ENCODE measurements at regions of chr5 and their contacts with region 1.

Region 1: GRCh38 chr5:20949636-20950035 is 961.6 kb upstream of the CDH18 start:
- DNase-seq: no peak
- ATAC-seq: no peak
- H3K4me3 ChIP-seq: no peak overlapping the region
- H3K27ac ChIP-seq: no peak overlapping the region
- H3K4me1 ChIP-seq: no peaks in the 10 kb centered on the region
- H3K27me3 ChIP-seq: no peaks in the 10 kb centered on the region
- CTCF ChIP-seq: no peak

Region 2: GRCh38 chr5:20590356-20590755 is 359.3 kb before region 1 on chr5:
- CTCF ChIA-PET with region 1: no interaction called
- POLR2A ChIA-PET with region 1: interaction called, 27 read pairs
- intact Hi-C with region 1: no loop called
- DNase-seq: no peak
- ATAC-seq: no peak
- H3K4me3 ChIP-seq: no peak overlapping the region
- H3K27ac ChIP-seq: no peak overlapping the region
- H3K4me1 ChIP-seq: no peaks in the 10 kb centered on the region
- H3K27me3 ChIP-seq: no peaks in the 10 kb centered on the region
- CTCF ChIP-seq: no peak

Region 3: DNA sequence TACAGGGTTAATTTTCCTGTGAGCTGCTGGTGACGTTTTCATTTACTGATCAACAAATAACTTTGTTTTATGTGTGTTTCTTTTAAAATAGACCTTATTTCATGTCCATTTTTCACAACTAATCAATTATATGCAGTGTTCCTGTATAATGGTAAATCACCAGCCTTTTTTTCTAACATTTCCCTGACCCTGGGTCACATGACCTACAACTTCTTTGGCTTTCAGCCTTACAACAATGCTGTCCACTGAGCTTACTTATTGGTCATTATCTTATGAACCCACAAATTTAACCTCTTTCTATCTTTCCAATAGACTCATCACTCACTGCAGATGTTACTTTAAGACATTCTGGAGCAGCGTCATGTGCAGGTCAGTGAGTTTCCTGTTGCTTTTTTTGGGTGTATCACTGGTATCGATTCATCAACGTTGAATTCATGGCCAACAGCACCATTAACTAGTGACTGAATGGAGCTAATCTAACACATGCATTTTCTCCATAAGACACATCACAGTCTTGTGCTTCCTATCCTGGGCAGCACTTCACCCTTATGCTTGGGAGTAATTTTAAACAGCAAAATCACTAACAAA is 289.1 kb before region 1 on chr5:
- CTCF ChIA-PET with region 1: no interaction called
- POLR2A ChIA-PET with region 1: no interaction called
- intact Hi-C with region 1: no loop called
- DNase-seq: no peak
- ATAC-seq: no peak
- H3K4me3 ChIP-seq: no peak overlapping the region
- H3K27ac ChIP-seq: no peak overlapping the region
- H3K4me1 ChIP-seq: no peaks in the 10 kb centered on the region
- H3K27me3 ChIP-seq: no peaks in the 10 kb centered on the region
- CTCF ChIP-seq: no peak

Region 4: DNA sequence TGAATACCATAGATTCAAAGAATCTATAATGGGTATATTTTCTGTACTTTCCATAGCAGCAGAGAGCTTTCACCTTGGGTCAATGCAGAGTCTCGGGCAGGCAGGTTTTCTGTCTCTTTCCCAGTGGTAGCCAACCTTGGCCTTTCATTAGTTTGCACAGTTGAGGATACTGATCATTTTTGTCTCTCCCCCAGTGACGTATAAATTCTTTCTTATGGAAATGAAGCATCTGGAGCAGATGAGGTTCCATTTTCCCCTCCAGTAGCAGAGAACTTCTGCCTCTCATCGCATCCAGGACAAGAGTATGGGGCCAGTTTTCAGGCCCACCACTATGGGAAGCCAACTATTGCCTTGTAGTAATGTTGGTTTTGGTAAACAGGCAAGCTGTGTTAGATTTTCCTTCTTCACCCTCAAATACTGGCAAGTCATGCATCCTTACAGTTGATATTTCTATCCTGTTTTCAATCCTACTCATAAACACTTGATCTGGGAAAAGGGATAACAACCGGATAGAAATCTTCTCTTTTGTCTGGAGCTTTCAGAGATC is 116.5 kb before region 1 on chr5:
- CTCF ChIA-PET with region 1: no interaction called
- POLR2A ChIA-PET with region 1: no interaction called
- intact Hi-C with region 1: no loop called
- DNase-seq: no peak
- ATAC-seq: no peak
- H3K4me3 ChIP-seq: no peak overlapping the region
- H3K27ac ChIP-seq: no peak overlapping the region
- H3K4me1 ChIP-seq: no peaks in the 10 kb centered on the region
- H3K27me3 ChIP-seq: no peaks in the 10 kb centered on the region
- CTCF ChIP-seq: no peak

Region 5: DNA sequence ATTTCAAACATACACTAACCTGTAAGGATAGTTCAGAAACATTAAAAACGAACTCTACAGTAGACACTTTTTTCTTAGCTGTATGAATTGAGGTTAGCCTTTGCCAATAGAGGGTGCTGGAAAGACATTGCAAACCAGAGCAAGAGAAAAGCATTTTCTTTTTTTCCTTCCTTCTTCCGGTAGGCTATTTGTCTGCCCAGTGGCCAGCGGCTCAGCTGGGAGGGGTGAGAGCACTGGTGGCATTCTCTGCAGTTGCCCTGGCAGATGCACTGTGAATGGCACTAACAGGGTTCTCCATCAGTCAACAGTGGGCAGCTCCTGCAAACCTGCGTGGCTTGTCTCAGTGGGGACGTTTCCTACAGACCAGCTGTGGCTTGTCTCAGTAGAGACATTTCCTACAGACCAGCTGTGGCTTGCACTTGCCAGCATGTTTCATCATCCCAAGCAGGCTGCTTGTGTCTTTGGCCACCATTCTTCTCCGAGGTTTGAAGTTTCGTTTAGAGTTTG is 22.8 kb after region 1 on chr5:
- CTCF ChIA-PET with region 1: no interaction called
- POLR2A ChIA-PET with region 1: no interaction called
- intact Hi-C with region 1: no loop called
- DNase-seq: peak; percentile 79
- ATAC-seq: peak; percentile 90
- H3K4me3 ChIP-seq: peak overlapping the region; percentile 56
- H3K27ac ChIP-seq: no peak overlapping the region
- H3K4me1 ChIP-seq: peaks cover 22% of the 10 kb centered on the region
- H3K27me3 ChIP-seq: no peaks in the 10 kb centered on the region
- CTCF ChIP-seq: peak; percentile 91

Region 6: DNA sequence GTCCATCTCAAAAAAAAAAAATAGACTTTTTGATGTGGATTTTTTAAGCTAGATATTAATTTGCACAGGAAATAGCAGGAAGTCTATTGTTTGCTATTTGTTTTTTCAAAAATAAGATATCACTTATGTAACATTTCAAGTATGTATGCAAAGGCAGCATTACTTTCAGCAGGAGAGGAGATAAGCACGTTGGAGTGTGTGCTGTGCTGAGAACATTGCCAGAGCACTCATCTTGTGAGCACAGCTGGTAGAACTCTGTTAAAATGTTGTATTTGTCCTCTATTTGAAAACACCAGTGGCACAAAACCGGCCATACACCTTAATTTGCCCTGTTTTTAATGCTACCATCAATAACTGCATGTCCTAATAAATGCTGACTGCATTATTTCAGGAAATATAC is 100.3 kb after region 1 on chr5:
- CTCF ChIA-PET with region 1: no interaction called
- POLR2A ChIA-PET with region 1: no interaction called
- intact Hi-C with region 1: no loop called
- DNase-seq: no peak
- ATAC-seq: no peak
- H3K4me3 ChIP-seq: no peak overlapping the region
- H3K27ac ChIP-seq: no peak overlapping the region
- H3K4me1 ChIP-seq: peaks cover 10% of the 10 kb centered on the region; the same call in 1 of the 2 replicates
- H3K27me3 ChIP-seq: no peaks in the 10 kb centered on the region
- CTCF ChIP-seq: no peak